Activated CD4-positive, alpha-beta memory T cell treated with anti-CD3 and anti-CD28 coated beads, Interleukin-2, amount 10 ng/mL, durations not matched to agents 7 days and 5 days (primary cell): ENCODE measurements at regions of chr19 and their contacts with region 1.

Region 1: DNA sequence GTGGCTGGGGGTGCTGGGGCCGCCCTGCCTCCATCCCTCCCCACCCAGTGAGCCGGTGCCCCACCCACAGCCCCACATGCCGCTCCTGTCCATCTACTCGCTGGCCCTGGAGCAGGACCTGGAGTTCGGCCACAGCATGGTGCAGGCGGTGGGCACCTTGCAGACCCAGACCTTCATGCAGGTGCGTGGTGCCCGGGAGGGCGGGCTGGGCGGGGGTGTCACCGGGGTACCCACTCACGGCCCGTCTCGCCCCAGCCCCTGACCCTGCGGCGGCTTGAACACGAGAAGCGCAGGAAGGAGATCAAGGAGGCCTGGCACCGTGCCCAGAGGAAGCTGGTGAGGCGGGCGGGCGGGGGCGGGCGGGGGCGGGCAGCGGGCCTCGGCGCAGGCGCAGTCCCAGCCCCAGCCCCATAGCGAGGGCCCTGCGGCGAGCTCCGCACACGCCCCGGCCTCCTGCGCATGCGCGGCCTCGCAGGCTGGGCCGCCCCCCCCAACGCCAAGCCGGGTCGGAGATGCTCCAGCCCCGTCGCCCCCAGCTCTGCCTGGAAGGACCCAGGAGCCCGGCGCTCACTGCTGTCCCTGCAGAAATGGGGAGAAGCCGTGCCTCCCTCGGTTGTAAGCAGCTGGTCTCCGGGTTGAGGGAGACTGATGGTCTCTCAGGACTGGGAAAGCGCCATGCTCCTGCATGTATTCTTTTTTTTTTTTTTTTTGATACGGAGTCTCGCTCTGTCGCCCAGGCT is 7.7 kb downstream of the ARHGAP45 start:
- DNase-seq: peak; percentile 91
- H3K4me3 Mint-ChIP-seq: peak overlapping the region; percentile 59
- H3K27ac Mint-ChIP-seq: peak overlapping the region; percentile 93
- H3K4me1 Mint-ChIP-seq: peaks cover 64% of the 10 kb centered on the region
- H3K27me3 Mint-ChIP-seq: no peaks in the 10 kb centered on the region

Region 2: DNA sequence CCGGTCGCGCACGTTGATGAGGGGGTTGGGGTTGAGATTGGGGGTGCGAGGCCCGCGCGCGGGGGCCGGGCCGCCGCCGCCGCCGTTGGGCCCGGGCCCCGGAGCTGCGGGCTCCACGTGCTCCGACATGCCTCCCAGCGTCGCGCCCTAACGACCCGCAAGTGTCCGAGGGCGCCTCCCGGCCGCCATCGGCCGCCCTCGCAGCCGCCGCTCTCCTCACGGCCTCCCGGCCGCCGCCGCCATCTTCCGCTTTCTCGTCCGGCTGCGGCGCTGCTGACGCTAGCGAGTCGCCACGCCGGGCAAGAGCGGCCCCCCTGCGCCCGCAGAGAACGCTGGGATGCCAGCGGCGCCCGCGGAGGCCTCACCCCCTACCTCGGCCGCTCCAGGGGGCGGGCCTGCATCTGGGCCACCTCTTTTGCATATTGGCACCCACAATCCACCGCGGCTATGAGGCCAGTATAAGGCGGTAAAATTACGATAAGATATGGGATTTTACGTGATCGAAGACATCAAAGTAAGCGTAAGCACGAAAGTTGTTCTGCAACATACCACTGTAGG is 53.8 kb before region 1 on chr19 and contains the start of gene TMEM259:
- CTCF ChIA-PET with region 1: interaction called, 3 read pairs
- POLR2A ChIA-PET with region 1: interaction called, 70 read pairs
- DNase-seq: peak; percentile 98
- H3K4me3 Mint-ChIP-seq: peak within 1 kb of the TSS; percentile 91
- H3K27ac Mint-ChIP-seq: peak within 1 kb of the TSS; percentile 92
- H3K4me1 Mint-ChIP-seq: peaks cover 47% of the 10 kb centered on the region
- H3K27me3 Mint-ChIP-seq: no peaks in the 10 kb centered on the region
- total RNA-seq, gene TMEM259: 181 TPM

Region 3: GRCh38 chr19:1026189-1027019 is 48.3 kb before region 1 on chr19 and contains the start of gene CNN2:
- CTCF ChIA-PET with region 1: interaction called, 5 read pairs
- POLR2A ChIA-PET with region 1: interaction called, 70 read pairs
- DNase-seq: peak; percentile 78
- H3K4me3 Mint-ChIP-seq: peak within 1 kb of the TSS; percentile 97
- H3K27ac Mint-ChIP-seq: peak within 1 kb of the TSS; percentile 95
- H3K4me1 Mint-ChIP-seq: peaks cover 33% of the 10 kb centered on the region
- H3K27me3 Mint-ChIP-seq: no peaks in the 10 kb centered on the region
- total RNA-seq, gene CNN2: 513 to 519 TPM

Region 4: GRCh38 chr19:1094975-1095701 is 20.4 kb after region 1 on chr19 and contains the start of gene POLR2E:
- CTCF ChIA-PET with region 1: interaction called, 3 read pairs
- POLR2A ChIA-PET with region 1: interaction called, 186 read pairs
- DNase-seq: peak; percentile 98
- H3K4me3 Mint-ChIP-seq: peak within 1 kb of the TSS; percentile 90
- H3K27ac Mint-ChIP-seq: peak within 1 kb of the TSS; percentile 92
- H3K4me1 Mint-ChIP-seq: peaks cover 62% of the 10 kb centered on the region
- H3K27me3 Mint-ChIP-seq: no peaks in the 10 kb centered on the region
- total RNA-seq, gene POLR2E: 116 to 120 TPM

Region 5: GRCh38 chr19:1425102-1425837 is 350.6 kb after region 1 on chr19:
- CTCF ChIA-PET with region 1: no interaction called
- POLR2A ChIA-PET with region 1: no interaction called
- DNase-seq: no peak
- H3K4me3 Mint-ChIP-seq: no peak overlapping the region
- H3K27ac Mint-ChIP-seq: no peak overlapping the region
- H3K4me1 Mint-ChIP-seq: no peaks in the 10 kb centered on the region
- H3K27me3 Mint-ChIP-seq: no peaks in the 10 kb centered on the region